ENCODE measurements at regions of chr6 and their contacts with region 1.

Region 1: GRCh38 chr6:38933432-38933831 is 115.1 kb upstream of the GLP1R start:
- DNase-seq: no peak
- ATAC-seq: peak; percentile 72 to 86 (median 79)
- H3K4me3 ChIP-seq: no peak overlapping the region
- H3K27ac ChIP-seq: no peak overlapping the region
- H3K4me1 ChIP-seq: no peaks in the 10 kb centered on the region
- H3K27me3 ChIP-seq: no peaks in the 10 kb centered on the region
- CTCF ChIP-seq: peak; percentile 44 to 60 (median 52)
- POLR2A ChIP-seq: no peak

Region 2: GRCh38 chr6:38871741-38872568 is 61.5 kb before region 1 on chr6:
- intact Hi-C with region 1: loop called in 1 of 2 experiments (anchors 10 kb)
- DNase-seq: peak in 2 of 3 donors; percentile 55 to 56
- ATAC-seq: peak; percentile 88 to 94 (median 90)
- H3K4me3 ChIP-seq: no peak overlapping the region
- H3K27ac ChIP-seq: no peak overlapping the region
- H3K4me1 ChIP-seq: no peaks in the 10 kb centered on the region
- H3K27me3 ChIP-seq: no peaks in the 10 kb centered on the region
- CTCF ChIP-seq: peak; percentile 89 to 94 (median 92)
- POLR2A ChIP-seq: no peak

Region 3: DNA sequence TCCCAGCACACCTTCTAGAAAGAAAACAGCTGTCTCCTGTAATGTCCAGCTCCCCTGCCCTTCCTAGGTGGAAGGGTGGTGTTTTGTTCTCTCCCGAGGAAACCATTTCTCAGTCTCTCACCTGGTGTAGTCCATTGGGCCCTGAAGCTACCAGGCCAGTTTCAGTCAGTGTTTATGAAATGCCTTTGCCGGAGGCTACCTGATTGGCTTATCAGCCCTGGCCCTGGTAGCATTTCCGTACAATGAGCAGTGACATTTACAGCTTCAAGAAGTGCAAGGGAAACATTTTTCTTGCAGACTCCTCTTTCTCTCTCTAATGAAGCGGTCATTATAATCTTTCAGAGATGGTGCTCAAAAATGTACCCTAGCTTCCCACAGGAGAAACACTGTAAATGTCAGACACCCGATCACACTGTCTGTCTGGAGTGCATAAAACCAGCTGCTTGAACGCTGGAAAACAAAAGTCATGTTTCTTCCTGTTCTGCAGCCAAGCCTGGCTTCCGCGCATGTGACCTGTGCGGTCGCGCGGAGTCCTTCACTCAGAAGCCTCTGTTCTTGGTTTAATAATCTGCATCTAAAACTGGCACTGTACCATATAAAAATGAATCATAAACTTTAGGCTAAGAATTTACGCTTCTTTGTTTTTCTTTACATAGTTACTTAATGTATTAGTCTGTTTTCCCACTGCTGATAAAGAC is 209.9 kb after region 1 on chr6:
- intact Hi-C with region 1: no loop called
- DNase-seq: no peak
- ATAC-seq: no peak
- H3K4me3 ChIP-seq: no peak overlapping the region
- H3K27ac ChIP-seq: no peak overlapping the region
- H3K4me1 ChIP-seq: no peaks in the 10 kb centered on the region
- H3K27me3 ChIP-seq: no peaks in the 10 kb centered on the region
- CTCF ChIP-seq: no peak
- POLR2A ChIP-seq: no peak

Region 4: GRCh38 chr6:39209360-39209811 is 276.0 kb after region 1 on chr6:
- intact Hi-C with region 1: no loop called
- DNase-seq: peak in 1 of 3 donors; percentile 46
- ATAC-seq: no peak
- H3K4me3 ChIP-seq: no peak overlapping the region
- H3K27ac ChIP-seq: no peak overlapping the region
- H3K4me1 ChIP-seq: peaks cover 0 to 95% (median 31%) of the 10 kb centered on the region in 4 donors
- H3K27me3 ChIP-seq: no peaks in the 10 kb centered on the region
- CTCF ChIP-seq: no peak
- POLR2A ChIP-seq: no peak

Measured in right lobe of liver (tissue), 6 donors.